Gastrocnemius medialis (tissue), 4 donors: ENCODE measurements at regions of chr16 and their contacts with region 1.

Region 1: DNA sequence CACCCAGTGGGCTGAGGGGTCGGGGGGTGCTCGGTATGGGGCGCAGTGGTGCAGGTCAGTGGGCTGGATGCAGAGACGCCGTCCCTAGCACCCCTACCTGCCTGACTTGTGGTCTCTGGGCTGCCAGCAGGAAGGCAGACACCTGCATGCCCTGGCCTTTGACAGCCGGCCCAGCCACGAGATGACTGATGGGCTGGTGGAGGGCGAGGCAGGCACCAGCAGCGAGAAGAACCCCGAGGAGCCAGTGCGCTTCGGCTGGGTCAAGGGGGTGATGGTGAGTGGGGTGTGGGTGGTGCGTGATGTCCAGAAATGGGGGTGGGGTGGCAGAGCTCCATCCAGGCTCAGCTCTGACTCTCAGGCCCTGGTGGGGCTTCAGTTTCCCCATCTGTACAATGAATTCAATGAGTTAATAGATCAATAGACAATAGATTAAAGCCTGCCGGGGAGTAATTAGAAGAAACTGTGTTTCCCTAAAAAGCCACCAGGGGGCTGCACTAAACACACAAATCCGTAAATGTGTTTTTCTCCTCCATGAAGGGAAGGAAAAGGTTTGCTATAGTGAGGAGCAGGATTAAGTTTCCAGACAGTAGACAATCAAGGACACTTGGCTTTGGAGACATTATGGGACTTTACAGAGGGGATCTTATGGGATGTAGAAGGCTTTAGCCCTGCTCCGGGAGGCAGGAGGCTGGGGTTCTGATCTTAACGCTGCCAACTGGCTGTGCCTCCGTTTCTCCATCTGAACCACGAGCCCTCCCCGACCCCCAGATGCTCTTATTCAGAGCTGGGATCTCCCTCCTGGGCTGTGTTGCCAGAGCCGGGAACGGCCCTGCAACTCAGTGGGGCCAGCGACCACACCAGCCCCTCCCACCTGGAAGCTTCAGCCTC is 2.2 kb downstream of the SLC12A3 start:
- DNase-seq: no peak
- ATAC-seq: peak; percentile 59 to 74
- H3K4me3 ChIP-seq: no peak overlapping the region
- H3K27ac ChIP-seq: peak overlapping the region in 1 of 4 donors; percentile 14
- H3K4me1 ChIP-seq: peaks cover 5 to 6% of the 10 kb centered on the region in 2 donors
- H3K27me3 ChIP-seq: no peaks in the 10 kb centered on the region
- CTCF ChIP-seq: peak; percentile 69 to 74 (median 72)
- POLR2A ChIP-seq: no peak

Region 2: GRCh38 chr16:56950881-56951771 is 83.9 kb after region 1 on chr16:
- in situ Hi-C with region 1: loop called in 3 of 4 experiments (anchors 10 kb)
- intact Hi-C with region 1: loop called (anchors 1 kb)
- DNase-seq: peak in 1 of 2 donors; percentile 43
- ATAC-seq: peak; percentile 42 to 55
- H3K4me3 ChIP-seq: no peak overlapping the region
- H3K27ac ChIP-seq: no peak overlapping the region
- H3K4me1 ChIP-seq: no peaks in the 10 kb centered on the region
- H3K27me3 ChIP-seq: no peaks in the 10 kb centered on the region
- CTCF ChIP-seq: peak in 4 of 5 experiments; percentile 18 to 58 (median 40)
- POLR2A ChIP-seq: no peak

Region 3: GRCh38 chr16:57045694-57046381 is 178.7 kb after region 1 on chr16:
- in situ Hi-C with region 1: loop called (anchors 10 kb)
- intact Hi-C with region 1: loop called (anchors 1 kb)
- DNase-seq: peak; percentile 32 to 70
- ATAC-seq: peak; percentile 70 to 75
- H3K4me3 ChIP-seq: no peak overlapping the region
- H3K27ac ChIP-seq: no peak overlapping the region
- H3K4me1 ChIP-seq: peaks cover 0 to 8% of the 10 kb centered on the region in 2 donors
- H3K27me3 ChIP-seq: no peaks in the 10 kb centered on the region
- CTCF ChIP-seq: peak; percentile 11 to 56 (median 45)
- POLR2A ChIP-seq: no peak